AG04450 (cell line): ENCODE measurements at regions of chr16 and their contacts with region 1.

Region 1: GRCh38 chr16:71610936-71611871 is 14.8 kb upstream of the MARVELD3 start:
- DNase-seq: no peak
- H3K4me3 ChIP-seq: no peak overlapping the region
- H3K27ac ChIP-seq: no peak overlapping the region
- H3K27me3 ChIP-seq: peaks cover 3% of the 10 kb centered on the region
- CTCF ChIP-seq: peak; percentile 82

Region 2: DNA sequence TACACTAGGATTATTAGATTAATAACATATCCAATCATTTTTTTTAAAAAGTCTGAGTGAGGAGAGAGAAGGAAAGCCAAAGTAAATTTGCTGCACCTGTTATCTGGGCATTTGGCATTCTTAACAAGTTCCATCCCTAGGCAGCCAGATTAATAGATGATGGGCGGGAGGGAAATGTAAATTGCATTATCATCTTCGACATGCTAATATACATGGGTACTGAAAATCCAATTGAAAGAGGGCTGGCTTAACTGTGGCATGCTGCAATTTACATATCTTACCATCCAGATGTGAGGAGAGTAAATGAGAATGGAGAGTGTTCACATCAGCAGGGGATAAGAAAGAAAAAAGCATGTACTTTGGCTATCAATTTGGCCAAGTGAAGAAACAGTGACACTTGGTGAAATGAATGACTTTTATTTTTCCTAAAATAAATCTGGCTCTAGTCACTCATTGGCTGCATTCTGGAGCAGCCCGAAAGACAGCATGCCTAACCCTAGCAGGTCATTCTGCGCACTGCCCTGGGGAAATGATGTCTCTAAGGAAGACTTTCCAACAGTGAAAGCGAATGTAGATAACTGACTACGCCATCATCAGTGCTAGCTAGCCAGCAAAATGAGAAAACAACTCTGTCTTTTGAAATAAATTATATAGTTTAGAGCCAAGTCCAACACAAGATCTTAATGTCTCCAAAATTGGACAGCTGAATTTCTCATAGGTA is 438.6 kb before region 1 on chr16:
- CTCF ChIA-PET with region 1: no interaction called
- POLR2A ChIA-PET with region 1: no interaction called
- DNase-seq: no peak
- H3K4me3 ChIP-seq: no peak overlapping the region
- H3K27ac ChIP-seq: no peak overlapping the region
- H3K27me3 ChIP-seq: no peaks in the 10 kb centered on the region
- CTCF ChIP-seq: no peak

Region 3: GRCh38 chr16:71230122-71230845 is 380.9 kb before region 1 on chr16 and contains the start of gene HYDIN:
- CTCF ChIA-PET with region 1: no interaction called
- POLR2A ChIA-PET with region 1: no interaction called
- DNase-seq: no peak
- H3K4me3 ChIP-seq: peak within 1 kb of the TSS; percentile 27
- H3K27ac ChIP-seq: no peak within 1 kb of the TSS
- H3K27me3 ChIP-seq: no peaks in the 10 kb centered on the region
- CTCF ChIP-seq: no peak
- polyA plus RNA-seq, gene HYDIN: 0.84 and 0.95 TPM in 2 replicates

Region 4: GRCh38 chr16:71499775-71500364 is 111.3 kb before region 1 on chr16:
- CTCF ChIA-PET with region 1: interaction called, 13 read pairs
- POLR2A ChIA-PET with region 1: no interaction called
- DNase-seq: peak; percentile 33
- H3K4me3 ChIP-seq: no peak overlapping the region
- H3K27ac ChIP-seq: no peak overlapping the region
- H3K27me3 ChIP-seq: no peaks in the 10 kb centered on the region
- CTCF ChIP-seq: peak; percentile 77

Region 5: DNA sequence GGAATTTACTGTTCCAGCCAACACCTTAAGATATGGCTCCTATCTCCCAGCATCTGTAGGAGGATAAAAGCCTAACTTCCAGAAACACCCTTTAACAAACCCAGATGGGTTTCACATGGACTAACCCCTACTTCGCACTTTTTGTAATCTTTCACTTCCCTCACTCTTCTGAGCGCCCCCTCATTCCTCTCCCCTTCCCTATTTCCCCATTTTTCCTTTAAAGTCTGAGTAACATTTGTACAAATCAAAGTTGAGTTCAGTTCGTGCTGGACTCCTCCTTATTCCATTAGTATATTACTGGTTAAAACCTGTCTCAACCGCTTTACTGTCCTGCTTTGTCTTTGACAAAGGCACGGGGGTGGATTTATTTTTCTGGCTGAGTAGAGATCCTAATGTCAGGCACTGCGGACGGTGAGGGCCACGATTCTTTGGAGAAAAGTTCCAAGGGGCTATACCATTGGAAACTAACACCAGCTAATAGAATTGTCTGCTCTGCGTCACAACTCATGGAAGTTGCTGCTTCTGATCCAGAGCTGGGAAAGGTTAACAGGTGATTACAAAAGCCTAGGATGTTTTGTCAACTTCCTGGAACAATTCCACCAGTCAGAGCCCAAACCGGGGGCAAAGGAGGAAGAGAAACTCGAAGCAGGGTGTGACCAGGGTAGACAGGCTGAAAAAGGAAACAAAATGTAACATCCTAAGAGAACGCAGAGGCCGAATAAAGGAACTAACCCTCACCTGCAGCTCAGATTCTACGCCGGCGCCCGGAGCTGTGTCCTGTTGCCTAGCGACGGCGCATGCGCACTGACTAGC is 46.8 kb before region 1 on chr16:
- CTCF ChIA-PET with region 1: interaction called, 27 read pairs
- POLR2A ChIA-PET with region 1: no interaction called
- DNase-seq: no peak
- H3K4me3 ChIP-seq: peak overlapping the region; percentile 73
- H3K27ac ChIP-seq: no peak overlapping the region
- H3K27me3 ChIP-seq: peaks cover 5% of the 10 kb centered on the region
- CTCF ChIP-seq: no peak

Region 6: GRCh38 chr16:71585318-71585703 is 25.9 kb before region 1 on chr16:
- CTCF ChIA-PET with region 1: interaction called, 13 read pairs
- POLR2A ChIA-PET with region 1: no interaction called
- DNase-seq: no peak
- H3K4me3 ChIP-seq: no peak overlapping the region
- H3K27ac ChIP-seq: no peak overlapping the region
- H3K27me3 ChIP-seq: no peaks in the 10 kb centered on the region
- CTCF ChIP-seq: no peak

Region 7: DNA sequence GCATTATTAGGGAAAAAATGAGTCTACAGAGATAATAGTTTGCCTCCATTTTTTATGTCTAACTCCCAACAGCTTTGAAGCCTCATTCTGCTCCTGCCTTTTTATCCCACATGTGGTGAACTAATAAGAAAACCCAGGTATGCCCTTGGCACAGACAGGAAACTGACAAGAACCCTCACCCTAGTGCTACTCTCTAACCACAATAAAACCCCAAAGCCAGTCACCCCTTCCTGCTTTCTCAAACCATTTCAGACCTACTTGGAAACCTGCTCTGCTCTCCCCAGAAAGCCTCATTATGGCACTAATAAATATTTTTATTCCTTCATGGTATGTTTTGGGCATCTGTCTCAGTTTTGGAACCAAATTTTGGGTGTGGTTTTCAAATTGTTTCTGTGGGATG is 10.9 kb after region 1 on chr16:
- CTCF ChIA-PET with region 1: interaction called, 21 read pairs
- POLR2A ChIA-PET with region 1: no interaction called
- DNase-seq: no peak
- H3K4me3 ChIP-seq: no peak overlapping the region
- H3K27ac ChIP-seq: no peak overlapping the region
- H3K27me3 ChIP-seq: peaks cover 20% of the 10 kb centered on the region
- CTCF ChIP-seq: no peak

Region 8: GRCh38 chr16:71637398-71637797 is 26.2 kb after region 1 on chr16:
- CTCF ChIA-PET with region 1: interaction called, 11 read pairs
- POLR2A ChIA-PET with region 1: no interaction called
- DNase-seq: peak; percentile 63
- H3K4me3 ChIP-seq: no peak overlapping the region
- H3K27ac ChIP-seq: peak overlapping the region; percentile 47
- H3K27me3 ChIP-seq: no peaks in the 10 kb centered on the region
- CTCF ChIP-seq: no peak